ENCODE measurements at regions of chr6 and their contacts with region 1.

Region 1: DNA sequence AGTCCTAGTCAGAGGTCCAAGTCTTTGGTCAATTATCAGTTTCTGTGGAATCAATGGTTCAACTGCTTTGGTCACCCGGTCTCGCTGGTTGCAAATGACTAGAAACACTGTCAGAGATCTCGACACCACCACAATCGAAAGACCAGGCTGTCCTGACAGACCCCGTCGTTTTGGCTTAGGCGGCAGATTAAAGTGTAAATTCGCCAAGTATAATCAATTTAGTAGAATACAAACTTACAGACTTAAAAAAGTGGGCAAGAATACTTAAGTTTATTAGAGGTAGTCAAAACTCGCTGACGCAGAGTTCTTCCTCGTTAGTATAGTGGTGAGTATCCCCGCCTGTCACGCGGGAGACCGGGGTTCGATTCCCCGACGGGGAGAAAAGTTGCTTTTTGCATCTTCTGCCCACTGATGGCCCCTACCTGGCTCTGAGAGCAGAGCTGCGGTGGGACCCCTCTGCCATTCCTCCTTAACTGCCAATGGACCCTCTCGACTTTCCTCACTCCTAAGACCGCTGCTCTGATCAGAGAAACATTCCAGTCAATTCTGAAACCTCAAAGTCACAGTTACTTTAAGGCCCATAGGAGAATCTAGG is 30.6 kb upstream of the ZNF184 start:
- DNase-seq: peak; percentile 61
- H3K4me3 ChIP-seq: peak overlapping the region; percentile 48 to 64 (median 60)
- H3K27ac ChIP-seq: peak overlapping the region; percentile 71
- H3K4me1 ChIP-seq: no peaks in the 10 kb centered on the region
- H3K27me3 ChIP-seq: no peaks in the 10 kb centered on the region
- CTCF ChIP-seq: no peak

Region 2: DNA sequence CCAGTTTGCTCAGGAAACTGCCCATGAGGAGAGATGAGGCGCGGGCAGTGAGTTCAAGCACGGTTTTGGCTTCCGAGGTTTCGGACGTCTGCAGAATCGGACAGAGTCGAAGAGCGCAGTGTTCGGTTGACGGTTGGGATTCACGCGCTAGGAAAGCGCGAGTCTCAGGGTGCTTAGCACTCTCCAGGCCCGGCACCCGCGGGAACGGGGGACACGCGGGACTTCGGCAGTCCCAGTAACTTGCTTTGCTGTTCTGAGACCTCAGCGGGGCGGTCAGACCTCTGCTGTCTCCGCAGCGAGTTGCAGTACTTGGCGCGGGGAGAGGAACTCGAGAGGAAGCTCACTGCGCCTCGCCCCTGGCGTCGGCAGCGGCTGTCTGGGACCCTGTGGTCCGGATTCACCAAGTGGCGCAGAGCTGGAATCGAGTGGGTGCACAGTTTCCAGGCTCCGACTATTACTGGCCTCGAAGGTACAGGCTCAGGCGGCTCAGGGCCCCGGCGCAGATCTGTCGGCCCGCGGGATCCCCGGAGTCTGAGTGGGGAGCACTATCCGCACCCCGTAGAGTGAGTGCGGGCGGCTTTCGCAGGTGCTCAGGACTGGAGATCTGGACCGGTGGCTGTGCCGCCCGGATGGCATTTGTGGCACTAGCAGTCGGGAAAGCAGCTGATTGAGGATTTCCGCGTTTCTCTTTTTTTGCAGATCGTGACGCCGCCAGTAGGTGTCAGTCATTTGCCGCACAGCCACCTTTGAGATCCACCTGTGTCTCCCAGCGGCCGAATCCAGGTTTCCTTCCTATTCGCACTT is 191.2 kb before region 1 on chr6 and contains the start of gene POM121L2:
- CTCF ChIA-PET with region 1: no interaction called
- dilution Hi-C with region 1: no loop called
- in situ Hi-C with region 1: no loop called
- intact Hi-C with region 1: loop called (anchors 2 kb)
- DNase-seq: peak; percentile 73
- H3K4me3 ChIP-seq: peak within 1 kb of the TSS; percentile 60 to 90 (median 65)
- H3K27ac ChIP-seq: no peak within 1 kb of the TSS
- H3K4me1 ChIP-seq: peaks cover 13% of the 10 kb centered on the region
- H3K27me3 ChIP-seq: no peaks in the 10 kb centered on the region
- CTCF ChIP-seq: peak; percentile 64 to 87
- total RNA-seq, gene POM121L2: not detected

Region 3: GRCh38 chr6:27374824-27375612 is 128.5 kb before region 1 on chr6:
- CTCF ChIA-PET with region 1: no interaction called
- dilution Hi-C with region 1: no loop called
- in situ Hi-C with region 1: no loop called
- intact Hi-C with region 1: loop called (anchors 1 kb)
- DNase-seq: peak; percentile 89
- H3K4me3 ChIP-seq: peak overlapping the region; percentile 64 to 90 (median 78)
- H3K27ac ChIP-seq: peak overlapping the region; percentile 55
- H3K4me1 ChIP-seq: peaks cover 11% of the 10 kb centered on the region
- H3K27me3 ChIP-seq: no peaks in the 10 kb centered on the region
- CTCF ChIP-seq: no peak

Region 4: DNA sequence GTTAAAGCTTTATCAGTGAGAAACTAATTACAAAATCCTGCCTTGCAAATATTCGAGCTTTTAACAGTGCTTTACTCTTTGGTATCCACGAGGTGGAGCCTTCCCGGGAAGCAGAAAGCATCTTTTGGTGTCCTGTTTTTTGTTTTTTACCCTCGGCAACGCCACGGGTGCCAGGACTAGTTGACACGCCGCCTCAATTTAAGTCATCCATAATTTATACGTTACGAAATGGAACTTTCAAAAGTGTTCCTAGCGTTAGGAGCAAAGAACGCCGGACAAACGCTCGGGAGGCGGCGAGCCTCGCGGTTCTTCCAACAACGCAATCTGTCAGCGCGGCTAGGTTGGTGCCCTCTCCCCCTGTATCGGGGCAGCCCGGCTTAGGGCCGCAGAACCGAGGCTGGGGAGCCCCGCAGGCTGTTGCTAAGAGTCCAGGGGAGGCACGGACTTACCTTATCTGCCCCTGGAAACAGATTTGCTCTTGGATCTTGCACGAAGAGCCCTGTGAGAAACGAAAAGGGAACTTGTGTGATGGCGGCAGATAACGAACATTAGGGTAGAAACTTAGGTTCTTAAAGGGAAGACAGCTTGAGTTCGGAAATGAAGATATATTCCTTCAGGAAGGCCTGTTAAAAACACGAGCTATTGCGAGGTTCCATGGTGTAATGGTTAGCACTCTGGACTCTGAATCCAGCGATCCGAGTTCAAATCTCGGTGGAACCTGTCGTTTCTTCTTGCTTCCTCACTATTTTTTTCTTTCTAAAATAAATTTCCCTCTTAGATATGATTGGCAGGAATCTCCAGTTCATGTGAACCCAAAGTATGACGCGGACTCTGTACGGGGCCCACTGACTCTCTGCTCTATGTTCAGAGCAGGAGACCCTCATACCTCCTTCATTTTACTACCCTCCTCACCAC is 15.6 kb after region 1 on chr6:
- CTCF ChIA-PET with region 1: no interaction called
- dilution Hi-C with region 1: no loop called
- in situ Hi-C with region 1: no loop called
- intact Hi-C with region 1: loop called (anchors 1 kb)
- DNase-seq: peak; percentile 86
- H3K4me3 ChIP-seq: peak overlapping the region; percentile 45 to 67 (median 55)
- H3K27ac ChIP-seq: peak overlapping the region; percentile 52
- H3K4me1 ChIP-seq: peaks cover 15% of the 10 kb centered on the region
- H3K27me3 ChIP-seq: peaks cover 3% of the 10 kb centered on the region
- CTCF ChIP-seq: peak; percentile 76 to 77

Region 5: DNA sequence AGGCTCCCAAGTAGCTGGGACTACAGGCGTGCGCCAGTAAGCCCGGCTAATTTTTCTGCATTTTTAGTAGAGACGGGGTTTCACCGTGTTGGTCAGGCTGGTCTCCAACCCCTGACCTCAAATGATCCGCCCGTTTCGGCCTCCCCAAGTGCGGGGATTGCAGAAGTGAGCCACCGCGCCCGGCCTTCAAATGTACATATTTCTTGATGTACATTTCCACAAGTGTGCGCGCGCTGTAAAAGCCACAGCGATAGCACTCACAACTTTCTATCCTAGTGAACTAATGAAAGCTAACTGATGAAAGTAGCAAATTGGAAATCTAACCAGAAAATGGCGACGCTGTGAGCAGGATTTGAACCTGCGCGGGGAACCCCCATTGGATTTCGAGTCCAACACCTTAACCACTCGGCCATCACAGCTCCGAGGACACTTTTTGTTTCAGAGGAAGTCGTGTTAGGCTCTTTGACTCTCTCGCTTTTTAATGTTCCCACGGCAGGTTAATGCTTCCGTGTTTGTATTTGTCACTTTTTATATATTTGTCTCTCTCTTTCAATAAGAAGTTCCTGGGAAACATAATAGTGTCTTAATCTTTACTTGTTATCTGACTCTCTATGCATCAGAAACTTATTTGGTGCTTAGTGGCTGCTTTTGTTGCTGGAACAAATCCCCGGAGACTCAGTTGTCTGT is 168.7 kb after region 1 on chr6:
- CTCF ChIA-PET with region 1: no interaction called
- dilution Hi-C with region 1: no loop called
- in situ Hi-C with region 1: no loop called
- intact Hi-C with region 1: loop called (anchors 5 kb)
- DNase-seq: peak; percentile 74
- H3K4me3 ChIP-seq: peak overlapping the region; percentile 32 to 46 (median 41)
- H3K27ac ChIP-seq: no peak overlapping the region
- H3K4me1 ChIP-seq: peaks cover 20% of the 10 kb centered on the region
- H3K27me3 ChIP-seq: no peaks in the 10 kb centered on the region
- CTCF ChIP-seq: no peak

Measured in mammary epithelial cell (primary cell).